ENCODE measurements at regions of chr3 and their contacts with region 1.

Region 1: DNA sequence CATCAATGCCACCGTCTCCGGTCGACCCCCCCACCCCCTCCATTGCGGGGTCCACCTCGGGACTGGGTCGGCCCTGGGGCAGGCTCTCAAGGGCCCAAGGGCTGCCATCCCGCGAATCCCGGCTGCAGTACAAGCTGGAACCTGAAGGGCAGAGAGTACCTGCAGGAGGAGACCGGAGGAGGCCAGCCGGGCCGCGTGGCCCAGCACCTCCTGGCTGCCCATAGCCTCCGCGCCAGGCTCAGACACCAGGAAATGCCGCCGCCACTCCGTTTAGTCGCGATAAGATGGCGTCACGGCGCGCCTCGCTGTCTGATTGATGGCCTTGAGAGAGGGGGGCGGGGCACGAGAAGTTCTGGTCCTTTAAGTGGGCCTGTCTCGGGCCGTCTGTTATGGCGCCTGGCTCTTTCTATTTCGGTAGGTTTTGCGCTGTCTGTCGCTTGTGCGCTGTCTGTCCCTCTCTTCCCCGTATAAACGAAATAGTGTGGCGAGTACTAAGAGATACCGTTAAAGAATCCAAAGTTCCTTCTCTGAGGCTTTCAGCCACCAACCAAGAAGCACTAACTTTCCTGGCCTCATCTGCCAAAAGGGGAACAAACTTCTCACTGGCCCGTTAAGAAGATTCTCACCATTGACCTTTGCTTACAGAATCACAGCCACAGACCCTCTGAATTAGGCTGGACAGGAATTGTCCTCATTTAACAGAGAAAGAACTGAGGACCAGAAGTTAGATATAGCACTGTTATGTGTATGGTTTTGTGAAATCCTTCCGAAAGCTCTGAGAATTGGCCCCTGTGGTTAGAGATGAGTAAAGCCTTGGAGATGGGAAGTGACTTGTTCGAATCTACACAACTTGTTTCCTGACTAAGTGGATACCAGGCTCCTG is at the start of gene RFT1:
- DNase-seq: peak; percentile 95
- H3K4me3 Mint-ChIP-seq: peak within 1 kb of the TSS; percentile 83
- H3K27ac Mint-ChIP-seq: peak within 1 kb of the TSS; percentile 38
- H3K4me1 Mint-ChIP-seq: peaks cover 10% of the 10 kb centered on the region
- H3K27me3 Mint-ChIP-seq: no peaks in the 10 kb centered on the region
- CTCF ChIP-seq: no peak
- total RNA-seq, gene RFT1: 30.5 and 35.0 TPM in 2 replicates

Region 2: GRCh38 chr3:53161820-53162671 is 31.6 kb after region 1 on chr3:
- CTCF ChIA-PET with region 1: interaction called, 6 read pairs
- intact Hi-C with region 1: loop called (anchors 2 kb)
- DNase-seq: no peak
- H3K4me3 Mint-ChIP-seq: peak overlapping the region; percentile 77
- H3K27ac Mint-ChIP-seq: peak overlapping the region; percentile 2
- H3K4me1 Mint-ChIP-seq: peaks cover 49% of the 10 kb centered on the region
- H3K27me3 Mint-ChIP-seq: no peaks in the 10 kb centered on the region
- CTCF ChIP-seq: no peak

Region 3: GRCh38 chr3:53195602-53196574 is 65.5 kb after region 1 on chr3:
- CTCF ChIA-PET with region 1: interaction called, 10 read pairs
- intact Hi-C with region 1: loop called (anchors 1 kb)
- DNase-seq: peak; percentile 55
- H3K4me3 Mint-ChIP-seq: no peak overlapping the region
- H3K27ac Mint-ChIP-seq: no peak overlapping the region
- H3K4me1 Mint-ChIP-seq: peaks cover 7% of the 10 kb centered on the region
- H3K27me3 Mint-ChIP-seq: no peaks in the 10 kb centered on the region
- CTCF ChIP-seq: peak; percentile 95

Measured in Calu3 (cell line).